SK-N-SH (cell line): ENCODE measurements at regions of chr2 and their contacts with region 1.

Region 1: GRCh38 chr2:100262555-100263320 is 59.6 kb downstream of the LONRF2 start:
- DNase-seq: peak; percentile 78
- H3K4me3 ChIP-seq: peak overlapping the region in 1 of 2 experiments; percentile 33; a peak in 1 of 4 replicates
- H3K27ac ChIP-seq: no peak overlapping the region
- H3K4me1 ChIP-seq: peaks cover 0 to 3% of the 10 kb centered on the region in 2 experiments; a peak in 1 of 4 replicates
- H3K27me3 ChIP-seq: no peaks in the 10 kb centered on the region
- CTCF ChIP-seq: peak; percentile 97
- EP300 ChIP-seq: no peak
- RAD21 ChIP-seq: peak; percentile 95

Region 2: DNA sequence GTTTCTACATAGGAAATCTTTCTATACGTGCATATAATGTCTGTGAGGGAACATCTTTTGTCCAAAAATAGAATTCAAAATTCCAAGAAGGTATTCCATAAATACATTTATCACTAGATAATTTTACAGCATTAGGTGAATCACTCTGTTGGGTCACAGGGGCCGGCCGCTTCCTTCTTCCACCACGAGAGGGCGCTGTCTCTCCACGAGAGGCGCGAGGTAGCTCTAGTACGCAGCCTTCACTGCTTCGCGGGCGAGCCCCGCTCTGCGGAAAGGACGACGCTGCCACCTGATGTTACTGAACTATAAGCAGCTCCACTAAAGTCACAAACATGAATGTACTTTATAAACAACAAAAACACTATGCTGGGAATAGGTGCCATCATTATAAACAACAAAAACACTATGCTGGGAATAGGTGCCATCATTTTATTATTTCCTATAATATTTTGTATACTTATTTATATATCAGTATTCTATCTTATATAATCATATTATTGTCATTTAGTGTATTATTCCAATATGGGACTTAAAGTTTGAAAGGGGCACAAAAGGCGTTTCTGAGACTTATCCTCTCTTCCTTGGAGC is 703.6 kb before region 1 on chr2:
- CTCF ChIA-PET with region 1: interaction called, 122 read pairs
- POLR2A ChIA-PET with region 1: no interaction called
- DNase-seq: peak; percentile 85
- H3K4me3 ChIP-seq: no peak overlapping the region; a peak in 1 of 4 replicates
- H3K27ac ChIP-seq: no peak overlapping the region
- H3K4me1 ChIP-seq: no peaks in the 10 kb centered on the region
- H3K27me3 ChIP-seq: no peaks in the 10 kb centered on the region
- CTCF ChIP-seq: peak; percentile 98
- EP300 ChIP-seq: no peak
- RAD21 ChIP-seq: peak; percentile 100

Region 3: GRCh38 chr2:100230754-100231153 is 32.0 kb before region 1 on chr2:
- CTCF ChIA-PET with region 1: interaction called, 20 read pairs
- POLR2A ChIA-PET with region 1: no interaction called
- DNase-seq: no peak
- H3K4me3 ChIP-seq: no peak overlapping the region
- H3K27ac ChIP-seq: no peak overlapping the region
- H3K4me1 ChIP-seq: peaks cover 0 to 14% of the 10 kb centered on the region in 2 experiments; a peak in 2 of 4 replicates
- H3K27me3 ChIP-seq: no peaks in the 10 kb centered on the region; the same call in 1 of the 2 replicates
- CTCF ChIP-seq: no peak
- EP300 ChIP-seq: no peak
- RAD21 ChIP-seq: no peak

Region 4: GRCh38 chr2:100285691-100286090 is 23.0 kb after region 1 on chr2:
- CTCF ChIA-PET with region 1: interaction called, 58 read pairs
- POLR2A ChIA-PET with region 1: no interaction called
- DNase-seq: no peak
- H3K4me3 ChIP-seq: no peak overlapping the region
- H3K27ac ChIP-seq: peak overlapping the region; percentile 12 to 85; a peak in 3 of 4 replicates
- H3K4me1 ChIP-seq: peaks cover 6 to 47% of the 10 kb centered on the region in 2 experiments
- H3K27me3 ChIP-seq: no peaks in the 10 kb centered on the region
- CTCF ChIP-seq: no peak
- EP300 ChIP-seq: peak in 1 of 2 experiments; percentile 64; a peak in 1 of 4 replicates
- RAD21 ChIP-seq: no peak

Region 5: GRCh38 chr2:100339823-100340222 is 77.1 kb after region 1 on chr2:
- CTCF ChIA-PET with region 1: interaction called, 16 read pairs
- POLR2A ChIA-PET with region 1: no interaction called
- DNase-seq: no peak
- H3K4me3 ChIP-seq: no peak overlapping the region
- H3K27ac ChIP-seq: no peak overlapping the region
- H3K4me1 ChIP-seq: no peaks in the 10 kb centered on the region
- H3K27me3 ChIP-seq: no peaks in the 10 kb centered on the region; the same call in 1 of the 2 replicates
- CTCF ChIP-seq: no peak
- EP300 ChIP-seq: no peak
- RAD21 ChIP-seq: no peak

Region 6: DNA sequence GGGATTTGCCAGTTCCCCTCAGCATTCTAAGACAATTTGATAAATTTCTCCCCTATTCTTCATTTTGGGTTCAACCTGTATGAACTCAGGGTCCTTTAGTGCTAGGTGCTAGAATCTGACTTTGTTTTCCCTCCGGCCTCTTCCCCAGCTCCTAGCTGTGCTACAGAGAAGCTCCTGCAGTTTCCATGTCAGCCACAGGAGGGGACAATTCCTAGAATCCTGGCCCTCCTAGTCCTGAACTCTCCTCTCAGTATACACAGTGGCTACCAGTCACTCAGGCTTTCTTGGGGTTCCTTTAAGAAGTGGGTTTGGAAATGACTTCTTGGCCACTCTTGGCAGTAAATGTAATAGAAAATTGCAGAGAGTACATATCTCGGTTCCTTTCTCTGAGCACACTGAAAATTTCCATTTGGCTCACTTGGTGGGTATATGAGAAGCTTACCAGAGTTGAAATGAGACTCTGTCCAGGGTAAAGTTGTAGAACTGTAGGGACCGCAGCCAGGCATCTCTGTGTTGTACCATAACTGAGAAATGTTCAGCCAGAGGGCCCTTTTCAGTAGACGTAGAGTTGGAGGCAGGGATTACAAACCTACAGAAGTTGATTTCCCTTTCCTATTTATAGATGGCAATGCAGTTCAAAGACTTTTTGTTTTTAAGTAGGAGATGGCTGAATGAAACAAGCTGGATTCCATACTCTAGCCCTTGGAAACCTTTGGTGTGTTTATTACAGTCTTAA is 159.8 kb after region 1 on chr2:
- CTCF ChIA-PET with region 1: interaction called, 24 read pairs
- POLR2A ChIA-PET with region 1: no interaction called
- DNase-seq: peak; percentile 75
- H3K4me3 ChIP-seq: no peak overlapping the region
- H3K27ac ChIP-seq: no peak overlapping the region
- H3K4me1 ChIP-seq: no peaks in the 10 kb centered on the region; a peak in 1 of 4 replicates
- H3K27me3 ChIP-seq: no peaks in the 10 kb centered on the region
- CTCF ChIP-seq: peak; percentile 57
- EP300 ChIP-seq: no peak
- RAD21 ChIP-seq: peak; percentile 36; the same call in 1 of the 2 replicates